ENCODE measurements at regions of chr11 and their contacts with region 1.

Region 1: DNA sequence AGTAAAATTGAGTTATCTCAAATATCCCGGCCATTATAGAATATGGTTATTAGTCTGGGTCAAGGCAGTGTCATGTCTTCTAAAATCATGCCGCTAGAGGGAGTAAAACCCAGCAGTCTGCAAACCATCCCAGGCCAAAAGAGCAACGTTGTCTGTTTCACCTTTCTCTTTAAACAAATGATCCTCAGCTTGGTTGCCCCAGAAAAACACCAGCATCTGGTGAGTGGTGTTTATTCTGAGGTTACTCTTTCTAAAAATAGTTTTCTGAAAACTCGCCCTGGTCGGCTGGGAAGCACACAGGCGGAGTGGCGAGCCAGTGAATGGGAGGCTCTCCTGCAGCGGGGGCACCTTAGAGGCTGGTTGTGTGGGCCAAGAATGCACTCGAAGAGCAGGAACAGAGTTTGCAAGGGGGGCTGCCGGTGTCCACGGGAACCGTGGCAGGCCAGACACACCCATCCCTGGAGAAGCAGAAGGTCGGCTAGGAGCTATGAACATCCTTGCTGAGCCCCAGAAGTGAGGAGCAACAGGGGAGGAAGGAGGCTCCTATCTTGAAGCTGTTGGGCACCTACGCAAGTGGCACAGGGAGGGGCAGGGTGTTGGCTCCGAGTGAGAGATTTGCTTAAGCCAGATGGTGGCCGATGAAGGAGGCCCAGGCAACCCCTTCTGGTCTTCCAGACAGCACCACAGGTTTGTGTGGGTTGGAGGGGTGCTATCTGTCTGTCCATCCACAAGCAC is 297.1 kb downstream of the ETS1 start:
- DNase-seq: peak; percentile 86
- H3K4me3 ChIP-seq: peak overlapping the region in 1 of 4 donors; percentile 32
- H3K27ac ChIP-seq: peak overlapping the region; percentile 85 to 87 (median 86)
- H3K4me1 ChIP-seq: peaks cover 15 to 54% (median 33%) of the 10 kb centered on the region in 4 donors
- H3K27me3 ChIP-seq: no peaks in the 10 kb centered on the region
- CTCF ChIP-seq: peak; percentile 83 to 96 (median 90)
- EP300 ChIP-seq: no peak
- POLR2A ChIP-seq: peak; percentile 50

Region 2: GRCh38 chr11:128522055-128522942 is 232.0 kb after region 1 on chr11:
- in situ Hi-C with region 1: loop called in 1 of 4 experiments (anchors 25 kb)
- intact Hi-C with region 1: loop called (anchors 10 kb)
- DNase-seq: peak; percentile 96
- H3K4me3 ChIP-seq: peak overlapping the region; percentile 62 to 78 (median 70)
- H3K27ac ChIP-seq: peak overlapping the region; percentile 88 to 95 (median 91)
- H3K4me1 ChIP-seq: peaks cover 14 to 65% (median 30%) of the 10 kb centered on the region in 4 donors
- H3K27me3 ChIP-seq: no peaks in the 10 kb centered on the region
- CTCF ChIP-seq: no peak
- EP300 ChIP-seq: no peak
- POLR2A ChIP-seq: peak; percentile 93

Region 3: DNA sequence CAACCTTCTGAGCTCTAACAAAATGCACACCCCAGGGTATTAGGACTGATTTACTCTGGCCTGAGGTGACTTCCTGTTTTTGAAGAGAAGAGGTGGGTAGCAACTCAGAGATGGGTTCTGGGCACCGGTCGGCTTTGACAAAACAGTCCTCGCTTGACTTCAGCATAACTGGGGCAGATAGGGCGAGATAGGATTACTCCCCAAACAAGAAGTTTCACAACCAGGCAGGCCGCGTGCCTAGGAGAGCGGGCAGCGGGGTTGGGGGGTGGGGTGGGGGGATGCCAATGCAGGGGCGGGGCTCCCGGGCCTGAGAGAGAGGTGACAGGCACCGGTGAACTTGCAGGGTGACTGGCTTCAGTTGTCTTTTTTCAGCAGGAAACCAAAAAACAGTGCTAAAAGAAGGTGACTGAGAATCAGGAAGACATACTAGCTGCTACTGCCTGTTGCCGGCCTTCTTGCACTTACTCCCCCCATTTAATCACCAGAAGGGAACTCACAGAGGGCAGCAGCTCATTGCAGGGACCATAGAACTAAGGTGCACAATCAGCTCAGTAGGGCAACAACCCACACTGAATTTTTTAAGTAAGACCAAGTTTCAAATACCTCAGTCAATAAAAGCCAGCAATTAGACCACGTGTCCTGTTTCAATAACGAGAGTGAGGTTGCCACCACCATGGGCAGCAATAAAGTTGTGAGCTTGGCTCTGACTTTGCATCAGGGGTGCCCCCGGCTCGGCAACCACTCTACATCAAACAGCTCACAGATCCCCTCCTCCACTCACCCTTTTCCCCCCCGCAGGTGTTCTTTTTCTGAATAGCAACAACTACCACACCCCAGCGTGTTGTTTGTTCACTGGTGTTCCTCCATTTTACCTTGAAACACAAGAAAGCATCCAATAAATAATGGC is 334.2 kb after region 1 on chr11:
- in situ Hi-C with region 1: loop called in 1 of 4 experiments (anchors 5 kb)
- intact Hi-C with region 1: no loop called
- DNase-seq: peak; percentile 58
- H3K4me3 ChIP-seq: no peak overlapping the region
- H3K27ac ChIP-seq: peak overlapping the region; percentile 41 to 55 (median 48)
- H3K4me1 ChIP-seq: peaks cover 0 to 26% (median under 1%) of the 10 kb centered on the region in 4 donors
- H3K27me3 ChIP-seq: no peaks in the 10 kb centered on the region
- CTCF ChIP-seq: no peak
- EP300 ChIP-seq: no peak
- POLR2A ChIP-seq: no peak

Measured in transverse colon (tissue), 4 donors.